ENCODE measurements at regions of chr2 and their contacts with region 1.

Region 1: DNA sequence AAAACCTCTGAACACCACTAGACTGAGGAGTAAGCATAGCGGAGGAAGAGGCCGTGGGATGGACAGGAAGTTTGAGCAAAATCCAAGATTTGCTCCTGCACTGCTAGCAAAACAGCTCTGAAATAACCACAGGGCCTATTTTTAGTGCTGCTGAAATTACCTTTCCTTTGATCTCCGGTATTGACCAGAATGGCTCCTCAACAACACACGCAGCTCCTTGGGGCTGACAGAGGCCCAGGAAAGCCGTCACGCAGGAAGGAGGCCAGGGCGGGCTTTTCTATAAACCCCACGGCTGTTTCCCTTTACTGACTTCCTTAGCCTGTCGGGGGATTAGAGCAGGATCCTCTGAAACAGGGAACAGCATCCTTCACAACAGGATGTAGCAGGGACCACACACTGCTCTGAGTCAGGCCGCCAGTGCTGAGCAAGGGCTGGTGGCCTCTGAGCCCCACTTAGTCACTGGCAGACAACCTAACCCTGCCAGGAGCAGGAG is 80.8 kb upstream of the LCLAT1 start:
- DNase-seq: peak in 1 of 5 donors; percentile 41
- ATAC-seq: peak in 3 of 4 donors; percentile 11 to 85 (median 33)
- H3K4me3 ChIP-seq: no peak overlapping the region
- H3K27ac ChIP-seq: peak overlapping the region in 10 of 12 donors; percentile 41 to 76 (median 53)
- H3K4me1 ChIP-seq: peaks cover 17 to 47% (median 28%) of the 10 kb centered on the region in 12 donors
- H3K27me3 ChIP-seq: no peaks in the 10 kb centered on the region
- CTCF ChIP-seq: no peak
- POLR2A ChIP-seq: no peak

Region 2: DNA sequence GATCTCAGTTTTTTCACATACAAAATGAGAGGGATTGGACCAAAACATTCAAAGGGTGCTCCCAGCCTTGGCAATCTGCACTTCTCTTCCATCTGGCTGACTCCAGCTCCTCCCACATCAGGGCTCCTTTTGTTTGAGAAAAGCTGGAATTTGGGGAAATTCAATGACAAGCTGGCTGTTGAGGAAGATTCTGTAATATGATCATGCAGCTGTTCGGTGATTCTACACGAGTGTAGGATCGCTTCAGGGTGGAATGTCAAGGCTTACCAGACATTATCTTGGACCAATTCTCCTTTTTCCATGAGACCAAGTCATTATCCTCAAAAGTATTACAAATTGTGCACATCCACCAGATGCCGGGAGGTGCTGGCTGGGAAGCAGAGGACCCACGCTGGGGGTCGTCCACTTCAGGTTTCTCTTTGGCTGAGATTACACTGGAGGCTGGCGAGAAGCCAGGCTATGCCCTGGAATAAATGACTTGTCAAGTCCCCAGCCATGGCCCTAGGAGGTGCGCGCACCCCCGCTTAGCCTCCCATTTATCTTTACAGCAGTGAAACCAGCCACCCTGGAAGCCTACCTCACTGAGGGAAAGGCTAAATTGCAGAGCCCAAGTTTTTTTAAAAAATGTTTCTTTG is 38.2 kb after region 1 on chr2:
- intact Hi-C with region 1: loop called in 3 of 10 experiments (anchors 5 kb)
- DNase-seq: peak in 3 of 5 donors; percentile 32 to 54 (median 36)
- ATAC-seq: peak in 2 of 4 donors; percentile 24 to 26
- H3K4me3 ChIP-seq: no peak overlapping the region
- H3K27ac ChIP-seq: peak overlapping the region; percentile 17 to 85 (median 44)
- H3K4me1 ChIP-seq: peaks cover 3 to 72% (median 38%) of the 10 kb centered on the region in 12 donors
- H3K27me3 ChIP-seq: peaks cover 0 to 2% (median 0%) of the 10 kb centered on the region in 9 donors
- CTCF ChIP-seq: no peak
- POLR2A ChIP-seq: no peak

Region 3: GRCh38 chr2:30446602-30447148 is 80.4 kb after region 1 on chr2:
- intact Hi-C with region 1: no loop called
- DNase-seq: no peak
- ATAC-seq: peak in 2 of 4 donors; percentile 5 to 13
- H3K4me3 ChIP-seq: peak overlapping the region; percentile 68 to 99 (median 91)
- H3K27ac ChIP-seq: peak overlapping the region; percentile 49 to 91 (median 86)
- H3K4me1 ChIP-seq: peaks cover 0 to 29% (median 12%) of the 10 kb centered on the region in 12 donors
- H3K27me3 ChIP-seq: no peaks in the 10 kb centered on the region
- CTCF ChIP-seq: no peak
- POLR2A ChIP-seq: no peak

Region 4: GRCh38 chr2:30932870-30933269 is 566.6 kb after region 1 on chr2:
- intact Hi-C with region 1: no loop called
- DNase-seq: no peak
- ATAC-seq: no peak
- H3K4me3 ChIP-seq: no peak overlapping the region
- H3K27ac ChIP-seq: no peak overlapping the region
- H3K4me1 ChIP-seq: no peaks in the 10 kb centered on the region
- H3K27me3 ChIP-seq: no peaks in the 10 kb centered on the region
- CTCF ChIP-seq: no peak
- POLR2A ChIP-seq: no peak

Measured in heart left ventricle (tissue), 16 donors.